SK-N-SH (cell line): ENCODE measurements at regions of chr7 and their contacts with region 1.

Region 1: DNA sequence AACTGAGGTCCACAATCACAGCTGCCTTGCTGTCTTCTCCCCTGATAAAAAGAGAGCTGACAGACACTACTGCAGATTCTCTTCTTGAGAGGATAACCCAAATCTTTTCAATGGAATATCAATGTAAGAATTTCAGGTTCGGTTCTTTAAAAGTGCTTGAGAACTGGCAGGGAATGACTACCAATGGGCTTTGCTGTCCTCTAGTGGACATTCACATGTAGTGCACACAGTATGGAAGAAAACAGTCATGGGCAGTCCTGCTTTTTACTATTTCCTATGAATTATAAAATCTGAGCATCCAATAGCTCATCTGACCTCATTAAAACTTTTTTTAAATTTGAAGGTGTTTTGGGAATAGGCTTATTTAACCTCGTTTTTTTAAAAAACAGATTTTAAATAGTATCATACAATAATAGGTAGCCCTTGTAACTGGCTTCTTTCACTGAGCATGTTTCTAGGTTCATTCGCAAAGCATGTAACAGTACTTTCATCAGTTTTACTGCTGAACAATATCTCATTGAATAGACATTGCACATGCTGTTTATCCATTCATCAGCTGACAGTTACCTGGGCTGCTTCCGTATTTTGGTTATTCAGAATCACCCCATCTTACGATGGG is 18.3 kb downstream of the FZD9 start:
- DNase-seq: peak; percentile 75
- H3K4me3 ChIP-seq: no peak overlapping the region; a peak in 1 of 4 replicates
- H3K27ac ChIP-seq: no peak overlapping the region
- H3K4me1 ChIP-seq: no peaks in the 10 kb centered on the region
- H3K27me3 ChIP-seq: no peaks in the 10 kb centered on the region
- CTCF ChIP-seq: peak; percentile 100
- EP300 ChIP-seq: no peak
- RAD21 ChIP-seq: peak; percentile 99

Region 2: GRCh38 chr7:73329861-73330581 is 121.9 kb before region 1 on chr7:
- CTCF ChIA-PET with region 1: interaction called, 108 read pairs
- POLR2A ChIA-PET with region 1: no interaction called
- DNase-seq: peak; percentile 35
- H3K4me3 ChIP-seq: no peak overlapping the region
- H3K27ac ChIP-seq: no peak overlapping the region
- H3K4me1 ChIP-seq: no peaks in the 10 kb centered on the region
- H3K27me3 ChIP-seq: peaks cover 17% of the 10 kb centered on the region; the same call in 1 of the 2 replicates
- CTCF ChIP-seq: no peak
- EP300 ChIP-seq: no peak
- RAD21 ChIP-seq: no peak

Region 3: DNA sequence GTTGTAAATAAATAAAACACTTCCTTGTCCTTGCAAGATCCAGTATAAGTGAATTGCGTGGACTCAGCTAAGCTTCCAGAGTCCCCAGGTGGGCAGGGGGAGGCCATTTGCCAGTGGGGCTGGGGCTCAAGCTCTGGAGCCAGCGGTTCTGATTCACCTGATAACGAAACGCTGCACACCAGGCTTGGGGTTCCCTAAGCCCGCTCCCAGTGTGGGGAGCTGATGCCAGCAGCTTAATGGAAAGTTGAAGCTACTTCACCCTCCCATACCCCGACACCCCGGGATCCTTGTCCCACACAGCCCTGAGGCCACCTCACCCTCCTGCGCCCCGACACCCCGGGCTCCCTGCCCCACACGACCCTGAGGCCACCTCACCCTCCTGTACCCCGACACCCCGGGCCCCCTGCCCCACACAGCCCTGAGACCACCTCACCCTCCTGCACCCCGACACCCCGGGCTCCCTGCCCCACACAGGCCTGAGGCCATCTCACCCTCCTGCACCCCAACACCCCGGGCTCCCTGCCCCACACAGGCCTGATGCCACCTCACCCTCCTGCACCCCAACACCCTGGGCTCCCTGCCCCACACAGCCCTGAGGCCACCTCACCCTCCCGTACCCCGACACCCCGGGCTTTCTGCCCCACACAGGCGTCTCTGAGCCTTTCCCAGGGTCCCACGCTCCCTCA is 93.2 kb before region 1 on chr7:
- CTCF ChIA-PET with region 1: interaction called, 15 read pairs
- POLR2A ChIA-PET with region 1: no interaction called
- DNase-seq: peak; percentile 39
- H3K4me3 ChIP-seq: no peak overlapping the region
- H3K27ac ChIP-seq: no peak overlapping the region
- H3K4me1 ChIP-seq: peaks cover 0 to 4% of the 10 kb centered on the region in 2 experiments; a peak in 1 of 4 replicates
- H3K27me3 ChIP-seq: peaks cover 28% of the 10 kb centered on the region; the same call in 1 of the 2 replicates
- CTCF ChIP-seq: no peak
- EP300 ChIP-seq: no peak
- RAD21 ChIP-seq: no peak

Region 4: DNA sequence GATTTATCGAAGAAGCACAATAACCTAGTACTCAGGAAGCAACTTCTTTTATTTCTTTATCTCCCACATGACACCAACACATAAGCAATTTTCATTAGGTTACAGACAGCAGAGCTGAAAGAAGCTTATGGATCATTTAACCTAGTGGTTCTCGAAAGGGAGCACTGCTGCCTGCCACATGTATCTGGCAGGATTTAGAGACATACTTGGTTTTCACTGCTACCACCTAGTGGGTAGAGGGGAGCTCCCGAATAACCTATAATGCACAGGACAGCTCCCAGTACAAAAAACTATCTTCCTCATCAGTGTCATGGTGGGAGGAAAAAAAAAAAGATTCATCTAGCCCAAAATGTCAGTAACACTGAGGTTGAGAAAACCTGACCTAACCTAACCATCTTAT is 16.2 kb after region 1 on chr7:
- CTCF ChIA-PET with region 1: interaction called, 44 read pairs
- POLR2A ChIA-PET with region 1: no interaction called
- DNase-seq: no peak
- H3K4me3 ChIP-seq: no peak overlapping the region
- H3K27ac ChIP-seq: no peak overlapping the region
- H3K4me1 ChIP-seq: no peaks in the 10 kb centered on the region
- H3K27me3 ChIP-seq: no peaks in the 10 kb centered on the region
- CTCF ChIP-seq: no peak
- EP300 ChIP-seq: no peak
- RAD21 ChIP-seq: no peak

Region 5: GRCh38 chr7:73487486-73487885 is 35.6 kb after region 1 on chr7:
- CTCF ChIA-PET with region 1: interaction called, 13 read pairs
- POLR2A ChIA-PET with region 1: no interaction called
- DNase-seq: no peak
- H3K4me3 ChIP-seq: no peak overlapping the region
- H3K27ac ChIP-seq: peak overlapping the region in 1 of 2 experiments; percentile 18; a peak in 1 of 4 replicates
- H3K4me1 ChIP-seq: peaks cover 3 to 7% of the 10 kb centered on the region in 2 experiments; a peak in 1 of 4 replicates
- H3K27me3 ChIP-seq: no peaks in the 10 kb centered on the region
- CTCF ChIP-seq: no peak
- EP300 ChIP-seq: no peak
- RAD21 ChIP-seq: no peak

Region 6: GRCh38 chr7:73612598-73613269 is 160.8 kb after region 1 on chr7:
- CTCF ChIA-PET with region 1: no interaction called
- POLR2A ChIA-PET with region 1: no interaction called
- DNase-seq: no peak
- H3K4me3 ChIP-seq: no peak overlapping the region
- H3K27ac ChIP-seq: no peak overlapping the region
- H3K4me1 ChIP-seq: no peaks in the 10 kb centered on the region; a peak in 1 of 4 replicates
- H3K27me3 ChIP-seq: no peaks in the 10 kb centered on the region; the same call in 1 of the 2 replicates
- CTCF ChIP-seq: peak; percentile 47
- EP300 ChIP-seq: no peak
- RAD21 ChIP-seq: peak; percentile 54; the same call in 1 of the 2 replicates